ENCODE measurements at regions of chr16 and their contacts with region 1.

Region 1: GRCh38 chr16:2166757-2167638 is 11.4 kb downstream of the TRAF7 start:
- DNase-seq: no peak
- H3K4me3 ChIP-seq: no peak overlapping the region
- H3K27ac ChIP-seq: no peak overlapping the region
- H3K4me1 ChIP-seq: peaks cover 42% of the 10 kb centered on the region
- H3K27me3 ChIP-seq: no peaks in the 10 kb centered on the region
- CTCF ChIP-seq: no peak

Region 2: GRCh38 chr16:2205104-2205966 is 38.3 kb after region 1 on chr16 and contains the start of gene MLST8:
- CTCF ChIA-PET with region 1: no interaction called
- dilution Hi-C with region 1: loop called (anchors 5 kb)
- in situ Hi-C with region 1: no loop called
- intact Hi-C with region 1: loop called (anchors 5 kb)
- DNase-seq: peak; percentile 80
- H3K4me3 ChIP-seq: peak within 1 kb of the TSS; percentile 92 to 97 (median 95)
- H3K27ac ChIP-seq: peak within 1 kb of the TSS; percentile 80
- H3K4me1 ChIP-seq: peaks cover 16% of the 10 kb centered on the region
- H3K27me3 ChIP-seq: no peaks in the 10 kb centered on the region
- CTCF ChIP-seq: peak in 1 of 2 donors; percentile 22
- total RNA-seq, gene MLST8: 39.0 to 55.8 TPM

Region 3: DNA sequence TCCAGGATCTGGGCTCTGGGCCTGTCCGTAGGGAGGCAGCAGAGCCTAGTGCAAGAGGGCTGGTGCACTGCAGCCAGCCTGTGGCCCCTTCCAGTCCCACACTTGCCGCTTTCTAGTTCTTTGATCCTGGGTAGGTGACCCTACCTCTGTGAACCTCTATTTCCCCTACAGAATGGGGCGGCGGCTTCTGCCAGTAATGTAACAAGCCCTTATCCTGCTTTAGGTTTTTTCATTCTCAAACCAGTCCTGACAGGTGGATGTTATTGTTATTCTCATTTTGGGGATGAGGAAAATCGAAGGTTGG is 57.1 kb after region 1 on chr16:
- CTCF ChIA-PET with region 1: no interaction called
- dilution Hi-C with region 1: no loop called
- in situ Hi-C with region 1: no loop called
- intact Hi-C with region 1: no loop called
- DNase-seq: no peak
- H3K4me3 ChIP-seq: peak overlapping the region; percentile 77 to 91 (median 88)
- H3K27ac ChIP-seq: peak overlapping the region; percentile 53
- H3K4me1 ChIP-seq: peaks cover 19% of the 10 kb centered on the region
- H3K27me3 ChIP-seq: no peaks in the 10 kb centered on the region
- CTCF ChIP-seq: peak in 1 of 2 donors; percentile 43

Region 4: GRCh38 chr16:2244245-2244691 is 77.3 kb after region 1 on chr16:
- CTCF ChIA-PET with region 1: no interaction called
- dilution Hi-C with region 1: loop called (anchors 5 kb)
- in situ Hi-C with region 1: no loop called
- intact Hi-C with region 1: no loop called
- DNase-seq: peak; percentile 50
- H3K4me3 ChIP-seq: no peak overlapping the region
- H3K27ac ChIP-seq: no peak overlapping the region
- H3K4me1 ChIP-seq: peaks cover 10% of the 10 kb centered on the region
- H3K27me3 ChIP-seq: no peaks in the 10 kb centered on the region
- CTCF ChIP-seq: no peak

Region 5: DNA sequence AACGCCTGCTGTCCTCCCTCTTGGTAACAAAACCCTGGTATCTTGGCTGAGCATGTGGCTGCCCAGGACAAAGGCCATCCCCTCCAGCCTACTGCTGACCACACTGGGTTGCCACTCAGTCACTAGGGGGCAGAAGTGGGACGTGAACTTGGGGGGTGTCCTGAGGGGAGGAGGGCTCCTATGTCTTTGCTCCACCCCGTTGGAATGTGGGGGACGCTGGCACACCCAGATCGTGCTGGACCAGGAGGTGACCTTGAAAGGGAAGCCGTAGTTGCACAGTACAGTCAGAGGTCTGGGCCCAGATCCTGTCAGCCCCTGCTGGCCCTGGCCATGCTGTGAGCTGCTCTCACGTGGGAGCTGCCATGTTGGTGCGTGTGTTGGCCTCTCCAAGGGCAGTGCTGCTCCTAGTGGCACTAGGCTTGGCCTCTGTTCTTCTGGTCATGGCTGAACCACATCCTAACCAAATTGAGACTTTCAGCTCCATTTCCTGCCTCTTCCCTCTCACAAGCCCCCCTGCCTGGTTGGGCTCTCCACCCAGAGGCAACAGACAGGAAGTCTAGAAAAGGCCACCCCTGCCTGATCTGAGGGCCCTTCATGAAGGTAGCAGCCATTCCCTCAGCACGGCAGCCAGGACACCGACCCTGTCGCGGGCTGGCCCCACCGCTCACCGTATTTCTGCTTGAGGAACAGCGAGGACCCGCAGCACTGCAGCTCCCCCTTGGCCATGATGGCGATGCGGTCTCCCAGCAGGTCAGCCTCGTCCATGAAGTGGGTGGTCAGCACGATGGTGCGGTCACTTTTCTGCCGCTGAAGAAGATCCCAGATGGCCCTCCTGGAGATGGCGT is 129.9 kb after region 1 on chr16:
- CTCF ChIA-PET with region 1: no interaction called
- dilution Hi-C with region 1: no loop called
- in situ Hi-C with region 1: no loop called
- intact Hi-C with region 1: no loop called
- DNase-seq: no peak
- H3K4me3 ChIP-seq: no peak overlapping the region
- H3K27ac ChIP-seq: no peak overlapping the region
- H3K4me1 ChIP-seq: no peaks in the 10 kb centered on the region
- H3K27me3 ChIP-seq: no peaks in the 10 kb centered on the region
- CTCF ChIP-seq: peak; percentile 29 to 58

Region 6: GRCh38 chr16:2507052-2507659 is 340.2 kb after region 1 on chr16:
- CTCF ChIA-PET with region 1: no interaction called
- dilution Hi-C with region 1: loop called (anchors 5 kb)
- in situ Hi-C with region 1: no loop called
- intact Hi-C with region 1: no loop called
- DNase-seq: no peak
- H3K4me3 ChIP-seq: no peak overlapping the region
- H3K27ac ChIP-seq: no peak overlapping the region
- H3K4me1 ChIP-seq: no peaks in the 10 kb centered on the region
- H3K27me3 ChIP-seq: no peaks in the 10 kb centered on the region
- CTCF ChIP-seq: no peak